ENCODE measurements at regions of chr4 and their contacts with region 1.

Region 1: DNA sequence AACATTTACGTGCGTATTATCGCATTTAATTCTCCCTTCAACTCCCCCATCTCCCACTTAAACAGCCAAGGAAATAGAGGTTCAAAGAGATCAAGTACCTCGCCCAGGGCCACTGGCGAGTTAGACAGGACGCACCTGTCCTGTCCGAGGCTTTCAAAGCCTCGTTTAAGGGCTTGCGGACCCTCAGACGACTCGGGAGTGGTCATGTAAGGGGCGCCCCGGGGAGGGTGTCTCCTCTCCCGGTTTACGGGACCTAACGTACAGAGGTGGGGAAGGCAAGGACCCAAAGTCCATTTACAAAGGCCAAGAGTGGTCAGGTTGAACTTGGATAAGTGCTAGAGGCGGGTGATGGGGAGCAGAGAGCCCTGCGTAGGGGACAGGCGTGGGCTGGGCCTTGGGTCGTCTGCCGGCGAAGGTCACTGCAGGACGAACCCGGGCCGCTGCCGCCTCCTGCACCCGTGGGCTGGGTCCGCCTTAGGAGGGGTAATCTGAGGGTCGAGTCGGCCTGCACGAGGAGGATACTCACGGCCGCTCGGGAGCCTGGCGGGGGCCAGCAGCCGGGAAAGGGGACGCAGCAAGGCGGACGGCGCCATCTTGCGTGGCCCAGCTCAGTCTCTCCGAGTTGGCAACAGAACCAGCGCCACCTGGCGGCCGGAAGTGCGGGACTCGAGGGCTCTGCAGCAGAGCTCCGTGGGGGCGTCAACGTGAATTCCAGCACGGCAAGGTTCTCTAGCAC is 5.9 kb upstream of the NAA15 start:
- DNase-seq: peak; percentile 93 to 94
- ATAC-seq: peak; percentile 73 to 76
- H3K4me3 ChIP-seq: peak overlapping the region; percentile 71 to 88 (median 75)
- H3K27ac ChIP-seq: peak overlapping the region; percentile 94 to 98 (median 96)
- H3K4me1 ChIP-seq: peaks cover 32 to 37% of the 10 kb centered on the region in 2 donors
- H3K27me3 ChIP-seq: no peaks in the 10 kb centered on the region
- CTCF ChIP-seq: peak; percentile 95 to 98 (median 96)
- POLR2A ChIP-seq: peak; percentile 34 to 36

Region 2: GRCh38 chr4:139083956-139084803 is 211.2 kb before region 1 on chr4:
- in situ Hi-C with region 1: loop called in 1 of 4 experiments (anchors 5 kb)
- intact Hi-C with region 1: no loop called
- DNase-seq: peak; percentile 81 to 91
- ATAC-seq: peak; percentile 66 to 69
- H3K4me3 ChIP-seq: peak overlapping the region; percentile 65 to 90 (median 70)
- H3K27ac ChIP-seq: peak overlapping the region; percentile 92 to 98 (median 92)
- H3K4me1 ChIP-seq: peaks cover 38 to 41% of the 10 kb centered on the region in 2 donors
- H3K27me3 ChIP-seq: no peaks in the 10 kb centered on the region
- CTCF ChIP-seq: peak in 4 of 5 experiments; percentile 23 to 56 (median 48)
- POLR2A ChIP-seq: peak; percentile 37 to 58

Region 3: DNA sequence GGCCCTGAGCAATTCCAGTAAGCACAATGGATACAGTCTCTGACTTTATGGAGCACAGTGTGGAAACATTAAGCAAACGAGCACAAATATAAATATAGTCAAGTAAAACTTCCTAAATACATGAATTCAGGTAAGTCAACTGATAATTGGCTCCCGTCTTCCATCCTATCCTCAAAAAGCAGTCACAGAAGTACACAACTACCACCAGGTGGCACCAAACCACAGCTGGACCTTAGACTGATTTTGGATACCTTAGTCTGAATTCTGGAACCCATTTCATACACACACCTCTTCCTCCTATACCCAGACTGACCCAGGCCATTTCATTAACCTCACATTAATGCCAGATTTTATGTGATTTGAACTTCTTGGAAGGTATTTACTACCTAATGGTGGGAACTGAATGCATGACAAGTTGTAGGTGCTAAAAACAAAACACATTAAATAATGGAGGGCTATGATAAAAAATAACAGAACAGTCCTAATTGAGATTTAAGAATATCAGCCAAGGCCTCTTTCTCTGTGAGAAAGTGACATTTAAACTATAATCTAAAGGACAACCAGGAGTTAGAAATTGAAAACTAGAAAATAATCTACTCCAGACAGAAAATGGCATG is 195.9 kb before region 1 on chr4:
- in situ Hi-C with region 1: loop called in 2 of 4 experiments (anchors 5 to 10 kb)
- intact Hi-C with region 1: loop called (anchors 1 kb)
- DNase-seq: peak; percentile 39 to 62
- ATAC-seq: peak; percentile 85 to 89
- H3K4me3 ChIP-seq: no peak overlapping the region
- H3K27ac ChIP-seq: no peak overlapping the region
- H3K4me1 ChIP-seq: peaks cover 17 to 21% of the 10 kb centered on the region in 2 donors
- H3K27me3 ChIP-seq: no peaks in the 10 kb centered on the region
- CTCF ChIP-seq: peak; percentile 71 to 89 (median 81)
- POLR2A ChIP-seq: no peak

Region 4: GRCh38 chr4:139108567-139109128 is 186.7 kb before region 1 on chr4:
- in situ Hi-C with region 1: loop called in 1 of 4 experiments (anchors 10 kb)
- intact Hi-C with region 1: no loop called
- DNase-seq: no peak
- ATAC-seq: no peak
- H3K4me3 ChIP-seq: no peak overlapping the region
- H3K27ac ChIP-seq: peak overlapping the region; percentile 39 to 68 (median 56)
- H3K4me1 ChIP-seq: peaks cover 17 to 21% of the 10 kb centered on the region in 2 donors
- H3K27me3 ChIP-seq: no peaks in the 10 kb centered on the region
- CTCF ChIP-seq: no peak
- POLR2A ChIP-seq: no peak

Region 5: DNA sequence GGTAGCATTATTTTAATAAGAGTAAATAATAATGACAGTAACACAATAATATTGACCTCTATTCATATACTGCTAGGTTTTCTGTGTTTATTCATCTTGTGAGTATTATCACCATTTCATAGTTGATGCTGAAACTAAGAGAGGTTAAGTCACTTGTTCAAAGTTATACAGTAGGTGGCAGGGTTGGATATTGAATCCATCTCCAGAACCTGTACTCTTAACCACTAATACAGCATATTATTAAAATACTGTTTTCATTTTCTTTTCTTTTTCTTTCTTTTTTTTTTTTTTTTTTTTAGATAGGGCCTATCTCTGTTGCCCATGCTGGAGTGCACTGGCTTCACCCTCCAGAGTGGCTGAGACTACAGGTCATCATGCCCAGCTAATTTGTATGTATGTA is 111.2 kb before region 1 on chr4:
- in situ Hi-C with region 1: loop called in 3 of 4 experiments (anchors 5 to 10 kb)
- intact Hi-C with region 1: no loop called
- DNase-seq: no peak
- ATAC-seq: no peak
- H3K4me3 ChIP-seq: no peak overlapping the region
- H3K27ac ChIP-seq: no peak overlapping the region
- H3K4me1 ChIP-seq: peaks cover 0 to 2% of the 10 kb centered on the region in 2 donors
- H3K27me3 ChIP-seq: no peaks in the 10 kb centered on the region
- CTCF ChIP-seq: no peak
- POLR2A ChIP-seq: no peak

Region 6: DNA sequence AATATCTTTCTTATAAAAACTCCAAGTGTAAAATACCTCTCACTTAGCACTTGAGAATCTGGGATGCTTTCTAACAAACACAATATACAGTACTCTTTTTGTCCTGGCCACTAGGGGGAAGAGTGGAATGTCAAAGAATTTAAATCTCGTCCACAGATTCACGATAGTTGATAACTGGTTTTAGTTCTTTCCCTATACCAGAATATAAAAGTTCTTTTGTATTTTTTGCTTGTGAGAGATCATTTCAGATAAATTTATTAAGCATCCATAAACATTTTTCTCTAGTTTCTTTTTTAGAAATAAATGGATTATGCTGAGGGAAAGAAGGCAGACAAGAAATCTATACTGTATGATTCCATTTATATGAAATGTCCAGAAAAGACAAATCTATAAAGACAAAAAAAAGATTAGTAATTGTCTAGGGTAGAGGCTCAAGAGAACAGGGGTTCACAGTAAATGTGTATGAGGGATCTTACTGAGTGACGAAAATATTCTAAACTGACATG is 65.8 kb before region 1 on chr4:
- in situ Hi-C with region 1: loop called in 2 of 4 experiments (anchors 10 kb)
- intact Hi-C with region 1: loop called (anchors 2 kb)
- DNase-seq: no peak
- ATAC-seq: peak; percentile 90 to 91
- H3K4me3 ChIP-seq: no peak overlapping the region
- H3K27ac ChIP-seq: no peak overlapping the region
- H3K4me1 ChIP-seq: no peaks in the 10 kb centered on the region
- H3K27me3 ChIP-seq: no peaks in the 10 kb centered on the region
- CTCF ChIP-seq: peak; percentile 53 to 71 (median 58)
- POLR2A ChIP-seq: no peak

Region 7: GRCh38 chr4:139416073-139416673 is 120.8 kb after region 1 on chr4:
- in situ Hi-C with region 1: no loop called
- intact Hi-C with region 1: no loop called
- DNase-seq: no peak
- ATAC-seq: no peak
- H3K4me3 ChIP-seq: no peak overlapping the region
- H3K27ac ChIP-seq: no peak overlapping the region
- H3K4me1 ChIP-seq: no peaks in the 10 kb centered on the region
- H3K27me3 ChIP-seq: no peaks in the 10 kb centered on the region
- CTCF ChIP-seq: peak; percentile 51 to 76 (median 57)
- POLR2A ChIP-seq: no peak

Region 8: GRCh38 chr4:140237606-140237986 is 942.2 kb after region 1 on chr4:
- in situ Hi-C with region 1: no loop called
- intact Hi-C with region 1: no loop called
- DNase-seq: peak; percentile 53 to 70
- ATAC-seq: peak; percentile 42 to 49
- H3K4me3 ChIP-seq: peak overlapping the region; percentile 25 to 45 (median 39)
- H3K27ac ChIP-seq: peak overlapping the region; percentile 84 to 90 (median 88)
- H3K4me1 ChIP-seq: peaks cover 38 to 48% of the 10 kb centered on the region in 2 donors
- H3K27me3 ChIP-seq: no peaks in the 10 kb centered on the region
- CTCF ChIP-seq: no peak
- POLR2A ChIP-seq: no peak

Measured in gastrocnemius medialis (tissue), 4 donors.